Endothelial cell of umbilical vein (primary cell): ENCODE measurements at regions of chr2 and their contacts with region 1.

Region 1: DNA sequence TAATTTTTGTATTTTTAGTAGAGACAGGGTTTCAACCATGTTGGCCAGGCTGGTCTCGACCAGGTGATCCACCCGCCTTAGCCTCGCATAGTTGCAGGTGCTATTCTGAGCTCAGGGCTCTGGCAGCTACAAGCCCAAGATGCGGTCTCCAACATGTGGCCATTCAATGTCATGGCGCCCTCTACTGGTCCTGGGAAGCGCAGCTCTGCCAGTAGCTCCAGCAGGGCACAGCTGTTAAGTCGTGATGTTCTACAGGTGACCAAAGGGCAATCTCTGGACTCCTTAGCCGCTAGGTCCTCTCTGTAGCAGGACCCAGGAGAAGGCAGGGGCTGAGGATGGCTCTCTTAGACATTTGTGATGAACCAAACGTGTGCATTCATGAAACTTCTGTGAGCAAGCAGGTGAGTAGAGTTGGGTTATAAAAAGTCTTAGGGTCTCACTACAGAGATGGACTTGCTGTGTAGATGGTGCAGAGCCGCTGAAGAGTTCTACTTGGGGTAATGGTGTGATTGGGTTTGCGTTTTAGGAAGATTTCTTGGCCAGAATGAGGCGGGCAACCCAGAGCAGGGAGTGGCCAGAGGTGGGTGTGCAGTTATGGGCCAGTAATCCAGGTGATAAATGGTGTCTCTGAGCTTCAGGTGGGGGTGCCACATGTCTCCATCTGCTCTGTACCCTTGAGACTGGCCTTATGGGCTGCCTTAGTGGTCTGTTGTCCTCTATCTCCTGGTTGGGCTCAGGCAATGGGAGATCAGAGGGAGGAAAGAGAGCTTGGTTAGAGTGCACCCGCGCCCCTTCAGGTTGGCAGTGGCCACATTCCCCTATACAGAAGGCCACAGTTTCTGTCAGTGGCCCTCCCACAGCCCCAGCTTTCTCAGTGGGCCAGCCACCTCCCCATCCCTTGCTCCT is 31.0 kb downstream of the IL37 start:
- DNase-seq: peak; percentile 67
- H3K4me3 ChIP-seq: no peak overlapping the region
- H3K27ac ChIP-seq: no peak overlapping the region
- H3K4me1 ChIP-seq: no peaks in the 10 kb centered on the region
- H3K27me3 ChIP-seq: peaks cover 19 to 21% of the 10 kb centered on the region in 2 experiments
- CTCF ChIP-seq: peak; percentile 83 to 94
- POLR2A ChIP-seq: no peak

Region 2: GRCh38 chr2:112626604-112627059 is 315.4 kb before region 1 on chr2:
- CTCF ChIA-PET with region 1: interaction called, 12 read pairs
- POLR2A ChIA-PET with region 1: no interaction called
- dilution Hi-C with region 1: no loop called
- intact Hi-C with region 1: no loop called
- DNase-seq: peak; percentile 86
- H3K4me3 ChIP-seq: peak overlapping the region in 1 of 3 experiments; percentile 14
- H3K27ac ChIP-seq: peak overlapping the region; percentile 91
- H3K4me1 ChIP-seq: peaks cover 73% of the 10 kb centered on the region
- H3K27me3 ChIP-seq: no peaks in the 10 kb centered on the region
- CTCF ChIP-seq: peak; percentile 93
- POLR2A ChIP-seq: no peak

Region 3: DNA sequence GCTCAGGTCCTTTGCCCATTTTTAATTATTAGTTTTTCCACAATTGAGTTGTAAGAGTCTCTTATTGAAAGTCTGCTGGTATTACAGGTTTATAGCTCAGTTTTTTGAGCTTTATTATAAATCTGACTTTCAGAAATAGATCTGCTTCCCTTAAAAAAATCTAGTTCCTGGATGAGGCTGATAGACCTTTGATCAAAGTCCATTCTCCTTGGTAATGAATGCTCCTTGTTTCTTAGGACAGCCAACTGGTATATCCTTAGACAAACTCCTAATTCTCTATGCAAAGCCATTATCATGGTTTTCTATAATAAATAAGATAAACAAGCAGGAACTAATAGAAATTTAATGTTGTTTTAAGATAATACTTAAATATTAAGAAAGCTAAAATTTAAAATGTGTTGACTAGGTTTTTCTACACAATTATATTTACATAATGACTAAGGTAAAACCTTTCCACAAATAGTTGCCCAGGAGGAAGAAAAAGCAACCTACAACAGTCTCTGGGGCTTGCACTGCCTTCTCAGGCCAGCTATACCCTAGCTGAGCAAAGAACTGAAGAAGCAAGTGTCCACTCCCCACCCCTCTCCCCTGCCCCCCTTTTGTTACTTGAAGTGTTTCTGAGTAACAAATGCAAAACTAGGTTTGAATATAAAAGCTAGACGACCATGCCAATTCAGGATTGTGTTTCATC is 204.3 kb before region 1 on chr2:
- CTCF ChIA-PET with region 1: interaction called, 48 read pairs
- POLR2A ChIA-PET with region 1: no interaction called
- dilution Hi-C with region 1: no loop called
- intact Hi-C with region 1: no loop called
- DNase-seq: no peak
- H3K4me3 ChIP-seq: no peak overlapping the region
- H3K27ac ChIP-seq: no peak overlapping the region
- H3K4me1 ChIP-seq: no peaks in the 10 kb centered on the region
- H3K27me3 ChIP-seq: no peaks in the 10 kb centered on the region
- CTCF ChIP-seq: no peak
- POLR2A ChIP-seq: no peak

Region 4: GRCh38 chr2:112764071-112765044 is 177.6 kb before region 1 on chr2 and contains the start of gene CKAP2L:
- CTCF ChIA-PET with region 1: interaction called, 44 read pairs
- POLR2A ChIA-PET with region 1: no interaction called
- dilution Hi-C with region 1: loop called (anchors 25 kb)
- intact Hi-C with region 1: no loop called
- DNase-seq: peak; percentile 98
- H3K4me3 ChIP-seq: peak within 1 kb of the TSS; percentile 78 to 90 (median 87)
- H3K27ac ChIP-seq: peak within 1 kb of the TSS; percentile 34
- H3K4me1 ChIP-seq: peaks cover 21% of the 10 kb centered on the region
- H3K27me3 ChIP-seq: no peaks in the 10 kb centered on the region
- CTCF ChIP-seq: no peak
- POLR2A ChIP-seq: peak; percentile 52
- total RNA-seq, gene CKAP2L: 25.2 and 30.7 TPM in 2 replicates

Region 5: GRCh38 chr2:112811841-112812306 is 130.1 kb before region 1 on chr2:
- CTCF ChIA-PET with region 1: interaction called, 14 read pairs
- POLR2A ChIA-PET with region 1: no interaction called
- dilution Hi-C with region 1: no loop called
- intact Hi-C with region 1: loop called (anchors 5 kb)
- DNase-seq: peak; percentile 99
- H3K4me3 ChIP-seq: no peak overlapping the region
- H3K27ac ChIP-seq: peak overlapping the region; percentile 97
- H3K4me1 ChIP-seq: peaks cover 27% of the 10 kb centered on the region
- H3K27me3 ChIP-seq: no peaks in the 10 kb centered on the region
- CTCF ChIP-seq: no peak
- POLR2A ChIP-seq: peak; percentile 83

Region 6: DNA sequence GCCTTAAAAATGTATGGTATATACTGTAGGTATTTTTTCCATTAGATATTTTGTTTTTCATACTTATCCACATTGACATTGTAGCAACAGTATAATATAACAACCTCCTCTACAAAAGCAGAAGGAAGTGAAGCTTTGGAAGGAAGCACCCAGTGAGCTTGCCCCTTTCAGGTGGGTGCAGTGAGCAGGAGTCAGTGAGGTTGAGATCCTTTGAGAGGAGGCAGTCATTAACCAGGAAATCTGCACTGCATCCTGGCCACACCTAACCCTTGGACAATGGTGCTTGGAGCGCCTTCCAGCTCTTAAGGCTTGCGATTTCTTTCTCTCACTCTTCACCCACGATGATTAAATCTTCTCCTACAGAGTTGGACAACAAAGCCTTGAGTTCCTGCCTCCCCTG is 17.2 kb before region 1 on chr2:
- CTCF ChIA-PET with region 1: interaction called, 30 read pairs
- POLR2A ChIA-PET with region 1: no interaction called
- dilution Hi-C with region 1: no loop called
- intact Hi-C with region 1: no loop called
- DNase-seq: no peak
- H3K4me3 ChIP-seq: no peak overlapping the region
- H3K27ac ChIP-seq: no peak overlapping the region
- H3K4me1 ChIP-seq: no peaks in the 10 kb centered on the region
- H3K27me3 ChIP-seq: peaks cover 14 to 17% of the 10 kb centered on the region in 2 experiments
- CTCF ChIP-seq: no peak
- POLR2A ChIP-seq: no peak

Region 7: GRCh38 chr2:113028112-113028511 is 86.1 kb after region 1 on chr2:
- CTCF ChIA-PET with region 1: no interaction called
- POLR2A ChIA-PET with region 1: no interaction called
- dilution Hi-C with region 1: no loop called
- intact Hi-C with region 1: no loop called
- DNase-seq: no peak
- H3K4me3 ChIP-seq: no peak overlapping the region
- H3K27ac ChIP-seq: no peak overlapping the region
- H3K4me1 ChIP-seq: no peaks in the 10 kb centered on the region
- H3K27me3 ChIP-seq: peaks cover 1 to 13% of the 10 kb centered on the region in 2 experiments
- CTCF ChIP-seq: no peak
- POLR2A ChIP-seq: no peak